Cardiac septum (tissue), 1 donor: ENCODE measurements at regions of chr17 and their contacts with region 1.

Region 1: DNA sequence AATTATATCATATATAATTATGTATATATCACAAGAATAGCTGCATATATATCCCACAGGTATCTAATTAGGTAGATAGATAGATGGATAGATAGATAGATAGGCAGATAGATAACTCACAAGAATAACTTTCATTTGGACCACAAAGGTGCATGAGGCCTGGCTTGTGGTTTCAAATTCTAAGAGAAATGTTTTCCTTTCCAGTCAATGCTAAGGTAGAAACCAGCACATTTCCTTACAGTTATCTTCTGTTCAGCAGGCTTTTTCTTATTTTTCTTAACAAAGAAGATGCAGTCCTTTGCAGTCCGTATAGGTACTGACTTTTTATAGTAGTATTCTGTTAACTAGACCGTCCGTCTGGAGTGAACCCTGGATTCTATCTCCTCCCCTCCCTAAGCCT is 152.9 kb upstream of the ANKFN1 start:
- DNase-seq: no peak

Region 2: GRCh38 chr17:55959756-55960155 is 40.7 kb before region 1 on chr17:
- intact Hi-C with region 1: loop called (anchors 2 kb)
- DNase-seq: no peak